ENCODE measurements at regions of chr4 and their contacts with region 1.

Region 1: DNA sequence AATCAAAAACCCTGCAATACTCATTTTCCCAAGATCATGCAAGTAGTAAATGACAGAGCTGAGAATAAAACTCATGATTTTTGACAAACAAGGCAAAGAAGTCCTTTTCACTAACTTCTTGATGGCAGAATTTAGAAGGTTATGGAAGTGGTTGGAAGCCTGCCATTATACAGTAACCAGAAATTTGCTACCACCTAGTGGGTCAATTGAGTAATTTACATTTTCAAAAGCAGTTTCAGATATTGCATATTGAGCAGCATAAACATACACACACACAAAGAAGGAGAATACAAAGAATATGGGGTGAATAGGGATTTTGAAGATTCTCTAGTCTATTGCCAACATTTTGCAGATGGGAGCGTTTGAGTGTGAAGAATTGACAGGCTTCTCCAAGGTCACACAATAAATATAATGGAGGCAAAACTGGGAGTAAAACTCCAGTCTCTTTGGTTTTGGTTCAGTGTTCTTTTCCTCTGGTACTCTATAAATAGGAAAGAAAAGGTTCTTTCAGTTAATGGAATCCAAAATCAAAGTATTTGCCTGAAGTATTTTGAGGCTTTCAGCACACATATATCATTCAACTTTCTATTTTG is 70.2 kb downstream of the GC start:
- DNase-seq: no peak

Region 2: DNA sequence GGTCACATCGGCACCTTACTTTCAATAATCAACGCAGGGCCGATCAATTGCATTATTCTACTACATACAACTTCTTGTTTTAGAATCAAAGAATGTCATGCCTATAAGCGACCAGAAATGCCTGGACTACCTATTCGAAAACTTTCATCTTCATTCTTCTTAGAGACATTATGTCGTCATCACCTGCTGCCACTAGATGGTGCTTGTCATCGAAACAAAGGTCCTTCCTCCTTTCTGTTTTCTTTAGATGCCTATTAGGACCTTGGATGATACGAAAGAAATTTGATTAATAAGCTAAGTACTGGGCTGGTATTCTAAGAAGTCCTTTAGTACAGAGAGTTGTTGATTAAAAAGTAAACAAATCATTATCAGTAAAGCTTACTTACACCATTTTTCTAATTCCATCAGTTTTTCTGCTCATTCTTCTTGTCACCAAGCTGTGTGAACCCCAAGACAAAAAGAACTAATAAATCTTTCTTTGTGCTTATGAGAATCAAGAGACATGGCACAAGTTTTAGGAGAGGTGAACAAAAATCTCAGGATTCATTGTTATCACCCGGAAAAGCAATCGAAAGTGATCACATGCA is 529.4 kb before region 1 on chr4:
- intact Hi-C with region 1: loop called (anchors 2 kb)
- DNase-seq: peak in 5 of 10 donors; percentile 14 to 54 (median 36)

Region 3: DNA sequence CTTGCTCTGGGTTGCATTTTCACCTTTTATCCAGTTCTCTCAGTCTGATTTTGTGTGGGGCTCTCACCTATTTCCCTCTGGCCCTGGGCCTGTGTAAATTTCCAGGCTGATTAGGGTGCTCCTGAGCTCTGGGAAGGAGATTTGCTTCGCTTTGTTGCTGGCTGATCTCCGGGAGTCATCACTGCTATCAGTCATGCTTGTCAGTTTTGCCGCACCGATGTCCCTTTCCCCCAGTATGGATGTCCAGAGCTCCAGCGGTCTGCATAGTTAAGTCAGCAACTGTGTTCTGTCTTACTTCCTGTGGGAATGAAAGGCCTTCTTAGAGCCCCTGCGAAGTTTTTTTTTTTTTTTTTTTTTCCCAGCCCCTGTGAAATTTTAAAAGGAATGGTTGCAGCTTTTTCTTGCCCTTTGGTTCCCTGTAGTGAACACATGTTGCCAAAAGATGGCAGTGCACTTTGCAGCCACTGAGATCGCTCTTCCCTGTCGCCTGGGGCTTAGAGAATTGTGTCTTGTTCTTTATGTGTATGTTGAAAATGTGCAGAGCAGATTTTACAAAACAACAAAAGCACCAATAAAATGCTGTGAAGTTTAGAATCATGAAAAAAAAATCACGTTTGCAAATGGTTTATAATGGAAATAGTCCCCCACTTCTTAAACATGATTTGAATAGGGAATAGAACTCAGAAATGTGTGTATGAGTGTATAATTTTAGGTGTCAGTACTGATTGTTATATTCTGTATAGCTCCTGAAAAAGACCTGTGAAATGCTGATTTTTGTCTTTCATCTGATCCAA is 484.0 kb before region 1 on chr4:
- intact Hi-C with region 1: loop called (anchors 1 kb)
- DNase-seq: peak in 6 of 10 donors; percentile 27 to 92 (median 53)